ENCODE measurements at regions of chr2 and their contacts with region 1.

Region 1: DNA sequence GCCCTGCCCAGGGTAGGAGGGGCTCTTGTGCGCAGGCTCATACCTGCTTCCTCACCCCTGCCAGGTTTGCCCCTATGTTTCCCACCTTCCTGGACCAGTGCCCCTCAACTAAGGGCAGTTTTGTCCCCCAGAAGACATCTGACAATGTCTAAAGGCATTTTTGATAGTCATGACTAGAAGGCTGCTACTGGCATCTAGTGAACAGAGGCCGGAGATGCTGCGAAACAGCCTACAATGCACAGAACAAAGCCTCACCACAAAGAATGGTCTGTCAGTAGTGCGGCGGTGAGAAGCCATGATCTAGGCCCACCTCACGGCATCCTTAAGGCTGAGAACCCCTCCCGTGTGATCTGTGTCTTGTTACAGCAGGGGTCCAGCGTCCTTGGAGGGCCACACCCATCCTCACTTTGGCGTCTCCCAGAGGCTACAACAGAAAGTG is 96.0 kb downstream of the TMEM17 start:
- DNase-seq: no peak
- H3K27ac ChIP-seq: no peak overlapping the region
- CTCF ChIP-seq: no peak

Region 2: GRCh38 chr2:61993444-61994024 is 416.5 kb before region 1 on chr2:
- CTCF ChIA-PET with region 1: interaction called, 19 read pairs
- POLR2A ChIA-PET with region 1: no interaction called
- DNase-seq: peak; percentile 50
- H3K27ac ChIP-seq: no peak overlapping the region
- CTCF ChIP-seq: peak; percentile 55

Measured in RWPE1 (cell line).